ENCODE measurements at regions of chr15 and their contacts with region 1.

Region 1: DNA sequence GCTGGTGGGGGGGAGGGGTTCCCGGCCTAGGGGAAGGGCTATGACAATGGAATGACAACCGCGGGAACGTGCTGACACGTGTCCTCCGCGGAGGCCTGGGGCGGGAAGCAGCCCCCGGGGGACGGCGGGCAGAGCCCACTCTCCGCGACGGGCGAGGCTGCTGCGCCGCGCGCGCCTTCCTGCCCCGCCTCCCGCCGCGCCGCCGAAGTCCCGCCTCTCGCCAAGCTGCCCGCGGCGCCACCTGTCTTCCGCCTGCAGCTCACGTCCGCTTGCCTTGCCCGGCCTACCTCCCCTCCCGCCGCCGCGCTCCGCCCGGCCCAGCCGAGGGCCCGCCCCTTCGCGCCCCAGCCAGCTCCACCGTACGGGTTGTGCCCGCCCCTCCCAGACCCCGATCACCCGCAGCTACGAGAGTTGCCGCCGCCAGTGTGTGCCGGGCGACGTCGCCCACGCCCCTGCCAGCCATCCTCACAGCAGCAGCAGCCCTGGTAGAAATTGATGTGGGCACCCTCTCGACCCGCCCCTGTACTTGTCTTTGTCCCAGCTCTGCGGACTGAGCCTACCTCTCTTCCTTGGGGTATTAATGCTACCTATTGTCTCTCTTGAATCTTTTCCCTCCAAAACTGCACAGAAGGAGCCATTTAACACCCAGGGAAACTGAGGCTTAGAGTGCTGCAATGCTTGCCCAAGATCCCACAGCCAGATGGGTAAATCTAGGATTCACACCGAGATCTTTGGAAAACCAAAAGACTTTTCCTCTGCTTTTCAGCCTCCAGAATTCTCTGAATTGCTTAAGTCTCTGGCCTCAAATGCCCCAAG is at the start of gene PARP16:
- DNase-seq: no peak
- ATAC-seq: peak; percentile 98
- H3K4me3 ChIP-seq: peak within 1 kb of the TSS; percentile 64 to 83
- H3K27ac ChIP-seq: peak within 1 kb of the TSS; percentile 93
- H3K4me1 ChIP-seq: peaks cover 13% of the 10 kb centered on the region
- H3K27me3 ChIP-seq: no peaks in the 10 kb centered on the region
- CTCF ChIP-seq: peak; percentile 67; the same call in 1 of the 2 replicates
- total RNA-seq, gene PARP16: 15.4 TPM

Region 2: DNA sequence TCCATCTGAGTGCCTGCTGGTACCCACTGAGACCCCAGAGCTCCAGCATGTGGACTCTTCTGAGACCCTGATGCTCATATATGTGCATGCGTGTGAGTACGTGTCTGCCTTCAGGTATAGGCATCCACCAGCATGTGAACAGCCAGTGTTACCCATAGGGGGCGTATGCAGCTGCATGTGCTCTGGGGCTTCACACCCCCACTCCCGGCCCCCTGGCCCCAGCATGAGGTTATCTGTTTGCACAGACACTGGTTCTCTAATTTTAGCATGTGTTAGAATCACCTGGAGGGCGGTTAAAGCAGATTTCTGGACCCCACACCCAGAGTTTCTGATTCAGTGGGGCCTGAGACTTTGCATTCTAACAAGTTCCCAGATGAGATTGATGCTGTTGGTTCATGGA is 74.8 kb before region 1 on chr15:
- CTCF ChIA-PET with region 1: interaction called, 12 read pairs
- POLR2A ChIA-PET with region 1: no interaction called
- in situ Hi-C with region 1: no loop called
- intact Hi-C with region 1: no loop called
- DNase-seq: no peak
- ATAC-seq: peak; percentile 59
- H3K4me3 ChIP-seq: no peak overlapping the region
- H3K27ac ChIP-seq: no peak overlapping the region
- H3K4me1 ChIP-seq: no peaks in the 10 kb centered on the region
- H3K27me3 ChIP-seq: no peaks in the 10 kb centered on the region
- CTCF ChIP-seq: peak; percentile 72; the same call in 1 of the 2 replicates

Region 3: GRCh38 chr15:65264863-65265430 is 22.0 kb before region 1 on chr15:
- CTCF ChIA-PET with region 1: interaction called, 6 read pairs
- POLR2A ChIA-PET with region 1: interaction called, 23 read pairs
- in situ Hi-C with region 1: no loop called
- intact Hi-C with region 1: no loop called
- DNase-seq: no peak
- ATAC-seq: no peak
- H3K4me3 ChIP-seq: no peak overlapping the region
- H3K27ac ChIP-seq: no peak overlapping the region
- H3K4me1 ChIP-seq: no peaks in the 10 kb centered on the region
- H3K27me3 ChIP-seq: no peaks in the 10 kb centered on the region
- CTCF ChIP-seq: no peak

Region 4: GRCh38 chr15:65355173-65355987 is 68.5 kb after region 1 on chr15:
- CTCF ChIA-PET with region 1: interaction called, 13 read pairs
- POLR2A ChIA-PET with region 1: no interaction called
- in situ Hi-C with region 1: no loop called
- intact Hi-C with region 1: no loop called
- DNase-seq: no peak
- ATAC-seq: peak; percentile 70
- H3K4me3 ChIP-seq: peak overlapping the region; percentile 30 to 45
- H3K27ac ChIP-seq: no peak overlapping the region
- H3K4me1 ChIP-seq: peaks cover 3% of the 10 kb centered on the region; the same call in 1 of the 2 replicates
- H3K27me3 ChIP-seq: peaks cover 16% of the 10 kb centered on the region
- CTCF ChIP-seq: no peak

Region 5: GRCh38 chr15:65571971-65572370 is 285.1 kb after region 1 on chr15:
- CTCF ChIA-PET with region 1: no interaction called
- POLR2A ChIA-PET with region 1: no interaction called
- in situ Hi-C with region 1: no loop called
- intact Hi-C with region 1: no loop called
- DNase-seq: no peak
- ATAC-seq: no peak
- H3K4me3 ChIP-seq: no peak overlapping the region
- H3K27ac ChIP-seq: no peak overlapping the region
- H3K4me1 ChIP-seq: no peaks in the 10 kb centered on the region
- H3K27me3 ChIP-seq: no peaks in the 10 kb centered on the region
- CTCF ChIP-seq: no peak